B cell (primary cell): ENCODE measurements at regions of chr12 and their contacts with region 1.

Region 1: DNA sequence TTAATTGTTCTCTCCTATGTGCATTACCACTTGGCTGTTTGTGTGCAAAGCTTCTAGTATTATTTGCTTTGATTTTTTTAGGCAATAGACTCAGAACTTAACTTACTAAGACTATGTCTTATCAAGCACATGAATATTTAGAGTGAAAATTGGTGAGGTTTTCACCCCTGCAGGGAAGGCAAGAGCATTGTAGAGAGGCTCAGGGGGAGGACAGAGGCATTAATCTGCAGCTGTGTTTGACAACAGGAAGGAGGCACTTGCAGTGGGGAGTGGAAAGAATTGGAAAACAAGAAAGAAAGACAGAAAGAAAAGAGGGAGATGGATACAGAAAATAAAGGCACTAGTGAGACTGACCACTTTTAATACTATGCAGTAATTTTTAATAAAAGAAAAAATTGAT is 431.6 kb downstream of the PDZRN4 start:
- DNase-seq: no peak
- ATAC-seq: no peak
- H3K4me3 ChIP-seq: no peak overlapping the region
- H3K4me3 Mint-ChIP-seq: no peak overlapping the region
- H3K27ac ChIP-seq: no peak overlapping the region
- H3K27ac Mint-ChIP-seq: no peak overlapping the region
- H3K4me1 ChIP-seq: no peaks in the 10 kb centered on the region
- H3K4me1 Mint-ChIP-seq: no peaks in the 10 kb centered on the region
- H3K27me3 ChIP-seq: no peaks in the 10 kb centered on the region
- H3K27me3 Mint-ChIP-seq: peaks cover 3% of the 10 kb centered on the region
- CTCF ChIP-seq: no peak

Region 2: DNA sequence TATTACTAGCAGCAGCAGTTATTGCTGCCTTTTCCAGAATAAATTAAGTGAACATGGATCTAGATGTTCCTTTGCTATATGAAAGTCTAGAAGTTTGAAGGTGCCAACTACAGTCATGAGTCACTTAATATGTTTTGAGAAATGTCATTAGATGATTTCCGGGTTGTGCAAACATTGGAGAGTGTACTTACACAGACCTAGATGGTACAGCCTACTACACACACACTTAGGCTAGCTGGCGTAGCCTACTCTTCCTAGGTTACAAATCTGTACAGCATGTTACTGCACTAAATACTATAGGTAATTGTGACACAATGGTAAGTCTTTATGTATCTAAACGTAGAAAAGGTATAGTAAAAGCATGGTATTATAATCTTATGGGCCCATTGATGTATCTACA is 63.5 kb before region 1 on chr12:
- CTCF ChIA-PET with region 1: no interaction called
- POLR2A ChIA-PET with region 1: no interaction called
- intact Hi-C with region 1: loop called (anchors 5 kb)
- DNase-seq: no peak
- ATAC-seq: no peak
- H3K4me3 ChIP-seq: no peak overlapping the region
- H3K4me3 Mint-ChIP-seq: no peak overlapping the region
- H3K27ac ChIP-seq: no peak overlapping the region
- H3K27ac Mint-ChIP-seq: no peak overlapping the region
- H3K4me1 ChIP-seq: no peaks in the 10 kb centered on the region
- H3K4me1 Mint-ChIP-seq: no peaks in the 10 kb centered on the region
- H3K27me3 ChIP-seq: no peaks in the 10 kb centered on the region
- H3K27me3 Mint-ChIP-seq: peaks cover 3% of the 10 kb centered on the region
- CTCF ChIP-seq: no peak